GM12878 (cell line): ENCODE measurements at regions of chr7 and their contacts with region 1.

Region 1: DNA sequence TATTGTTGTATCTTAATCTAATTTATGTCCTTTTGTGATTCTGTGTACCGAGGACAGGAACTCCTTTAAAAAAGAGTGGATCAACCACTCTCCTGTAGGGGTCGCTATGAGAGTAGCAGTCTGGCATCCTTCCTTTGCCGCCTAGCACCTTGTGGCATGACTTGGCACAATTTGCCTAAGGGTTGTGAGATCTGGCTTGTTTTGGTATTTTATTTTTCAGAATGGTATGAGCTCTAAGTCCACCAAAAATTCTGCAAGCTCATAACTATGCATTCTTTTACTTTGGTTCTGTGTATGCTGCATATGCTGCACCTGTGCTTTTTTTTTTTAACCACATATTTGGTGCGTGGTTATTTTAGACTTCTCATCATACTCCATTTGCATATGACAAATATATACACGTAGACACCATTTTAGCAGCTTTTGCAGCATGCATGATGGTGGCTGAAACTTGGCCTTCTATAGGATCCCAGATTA is 112.8 kb downstream of the CDK14 start:
- DNase-seq: peak; percentile 67
- ATAC-seq: peak; percentile 71
- H3K4me3 ChIP-seq: peak overlapping the region; percentile 64
- H3K27ac ChIP-seq: peak overlapping the region; percentile 78
- H3K4me1 ChIP-seq: peaks cover 7% of the 10 kb centered on the region
- H3K27me3 ChIP-seq: no peaks in the 10 kb centered on the region
- CTCF ChIP-seq: peak; percentile 84 to 93 (median 88)
- EP300 ChIP-seq: no peak
- POLR2A ChIP-seq: no peak
- RAD21 ChIP-seq: peak; percentile 89

Region 2: GRCh38 chr7:90455163-90456030 is 253.5 kb before region 1 on chr7:
- CTCF ChIA-PET with region 1: interaction called, 9 read pairs
- POLR2A ChIA-PET with region 1: interaction called, 4 read pairs
- RAD21 ChIA-PET with region 1: interaction called, 7 read pairs
- SMC1A ChIA-PET with region 1: interaction called, 6 read pairs
- in situ Hi-C with region 1: no loop called
- intact Hi-C with region 1: loop called (anchors 5 kb)
- DNase-seq: peak; percentile 7
- ATAC-seq: peak; percentile 93
- H3K4me3 ChIP-seq: no peak overlapping the region
- H3K27ac ChIP-seq: no peak overlapping the region
- H3K4me1 ChIP-seq: no peaks in the 10 kb centered on the region
- H3K27me3 ChIP-seq: no peaks in the 10 kb centered on the region
- CTCF ChIP-seq: peak; percentile 61 to 76 (median 63); a peak in 5 of 6 replicates
- EP300 ChIP-seq: no peak
- POLR2A ChIP-seq: no peak
- RAD21 ChIP-seq: peak; percentile 79

Region 3: DNA sequence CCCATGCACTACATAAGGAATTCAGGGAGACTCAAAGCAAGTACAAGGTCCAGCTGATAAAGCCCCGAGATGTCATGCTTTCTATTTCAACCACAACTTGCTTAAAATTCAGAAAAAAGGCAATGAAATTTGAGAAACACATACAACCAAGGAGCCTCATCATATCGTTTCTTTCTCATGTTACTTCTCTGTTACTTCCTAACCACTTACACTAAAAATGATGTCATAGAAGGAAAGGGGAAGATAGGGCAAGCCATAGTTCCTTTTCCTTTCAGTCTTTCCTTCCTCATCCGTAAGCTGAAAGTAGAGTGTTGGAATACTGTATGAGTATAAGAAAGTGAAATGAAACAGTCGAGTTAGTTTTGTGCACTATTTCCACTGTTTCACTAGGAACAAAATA is 140.7 kb before region 1 on chr7:
- CTCF ChIA-PET with region 1: no interaction called
- POLR2A ChIA-PET with region 1: no interaction called
- RAD21 ChIA-PET with region 1: no interaction called
- SMC1A ChIA-PET with region 1: no interaction called
- in situ Hi-C with region 1: no loop called
- intact Hi-C with region 1: no loop called
- DNase-seq: no peak
- ATAC-seq: peak; percentile 22; the same call in 2 of the 3 replicates
- H3K4me3 ChIP-seq: no peak overlapping the region
- H3K27ac ChIP-seq: no peak overlapping the region
- H3K4me1 ChIP-seq: no peaks in the 10 kb centered on the region
- H3K27me3 ChIP-seq: no peaks in the 10 kb centered on the region
- CTCF ChIP-seq: no peak
- EP300 ChIP-seq: no peak
- POLR2A ChIP-seq: no peak
- RAD21 ChIP-seq: no peak

Region 4: GRCh38 chr7:90720984-90721760 is 12.3 kb after region 1 on chr7:
- CTCF ChIA-PET with region 1: interaction called, 60 read pairs
- POLR2A ChIA-PET with region 1: interaction called, 25 read pairs
- RAD21 ChIA-PET with region 1: interaction called, 41 read pairs
- SMC1A ChIA-PET with region 1: interaction called, 181 read pairs
- in situ Hi-C with region 1: no loop called
- intact Hi-C with region 1: no loop called
- DNase-seq: no peak
- ATAC-seq: peak; percentile 59
- H3K4me3 ChIP-seq: no peak overlapping the region
- H3K27ac ChIP-seq: no peak overlapping the region
- H3K4me1 ChIP-seq: peaks cover 4% of the 10 kb centered on the region
- H3K27me3 ChIP-seq: no peaks in the 10 kb centered on the region
- CTCF ChIP-seq: no peak
- EP300 ChIP-seq: no peak
- POLR2A ChIP-seq: no peak
- RAD21 ChIP-seq: no peak

Region 5: DNA sequence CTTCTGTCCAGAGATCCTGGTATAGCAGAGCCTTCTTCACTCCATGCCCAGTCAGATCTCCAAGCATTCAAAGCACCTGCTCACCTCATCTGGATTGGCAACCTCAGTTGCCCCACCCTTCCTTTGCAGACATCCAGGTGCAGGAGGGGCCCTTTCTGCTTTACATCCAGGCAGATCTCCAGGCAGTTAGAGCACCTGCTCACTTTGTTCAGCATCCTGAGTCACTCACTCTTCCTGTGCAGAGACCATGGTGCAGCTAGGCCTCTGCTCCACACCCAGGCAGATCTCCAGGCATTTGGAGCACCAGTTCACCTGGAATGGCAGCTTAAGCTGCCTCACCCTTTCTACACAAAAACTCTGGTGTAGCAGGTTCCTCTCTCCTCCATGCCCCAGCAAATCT is 40.4 kb after region 1 on chr7:
- CTCF ChIA-PET with region 1: interaction called, 183 read pairs
- POLR2A ChIA-PET with region 1: no interaction called
- RAD21 ChIA-PET with region 1: interaction called, 47 read pairs
- SMC1A ChIA-PET with region 1: interaction called, 73 read pairs
- in situ Hi-C with region 1: no loop called
- intact Hi-C with region 1: loop called (anchors 1 kb)
- DNase-seq: no peak
- ATAC-seq: peak; percentile 22; the same call in 1 of the 3 replicates
- H3K4me3 ChIP-seq: no peak overlapping the region
- H3K27ac ChIP-seq: no peak overlapping the region
- H3K4me1 ChIP-seq: no peaks in the 10 kb centered on the region
- H3K27me3 ChIP-seq: no peaks in the 10 kb centered on the region
- CTCF ChIP-seq: no peak
- EP300 ChIP-seq: no peak
- POLR2A ChIP-seq: no peak
- RAD21 ChIP-seq: no peak

Region 6: GRCh38 chr7:90816511-90817142 is 107.7 kb after region 1 on chr7:
- CTCF ChIA-PET with region 1: interaction called, 13 read pairs
- POLR2A ChIA-PET with region 1: no interaction called
- RAD21 ChIA-PET with region 1: interaction called, 16 read pairs
- SMC1A ChIA-PET with region 1: interaction called, 20 read pairs
- in situ Hi-C with region 1: no loop called
- intact Hi-C with region 1: loop called (anchors 2 kb)
- DNase-seq: peak; percentile 85
- ATAC-seq: peak; percentile 99
- H3K4me3 ChIP-seq: no peak overlapping the region
- H3K27ac ChIP-seq: peak overlapping the region; percentile 52
- H3K4me1 ChIP-seq: 0 out of 2 replicates have a peak, but pooled peaks cover 4% of the 10 kb centered on the region
- H3K27me3 ChIP-seq: no peaks in the 10 kb centered on the region
- CTCF ChIP-seq: no peak
- EP300 ChIP-seq: peak in 1 of 2 experiments; percentile 93; a peak in 3 of 4 replicates
- POLR2A ChIP-seq: no peak
- RAD21 ChIP-seq: no peak

Region 7: DNA sequence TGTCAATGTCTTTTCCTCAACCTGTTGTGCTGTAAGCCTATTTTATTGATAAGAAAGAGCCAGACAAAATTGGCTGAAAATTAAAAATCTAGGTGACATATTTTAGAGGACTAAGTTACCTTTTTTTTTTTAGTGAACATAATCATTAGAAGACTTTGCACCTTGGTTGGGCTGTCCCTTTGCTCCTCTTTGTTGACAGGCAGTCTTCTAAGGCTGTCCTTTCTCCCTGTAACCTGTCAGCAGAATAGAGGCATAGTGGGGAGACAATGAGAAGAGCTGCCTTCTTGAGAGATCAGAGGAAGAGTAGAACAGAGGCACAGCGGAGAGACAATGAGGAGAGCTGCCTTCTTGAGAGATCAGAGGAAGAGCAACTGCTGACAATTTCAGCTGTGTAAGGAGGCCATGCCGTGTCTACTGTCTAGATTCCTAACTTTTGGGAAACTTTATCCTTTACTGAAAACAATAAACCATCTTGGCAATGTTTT is 317.1 kb after region 1 on chr7:
- CTCF ChIA-PET with region 1: interaction called, 271 read pairs
- POLR2A ChIA-PET with region 1: no interaction called
- RAD21 ChIA-PET with region 1: interaction called, 132 read pairs
- SMC1A ChIA-PET with region 1: interaction called, 176 read pairs
- in situ Hi-C with region 1: loop called (anchors 5 kb)
- intact Hi-C with region 1: no loop called
- DNase-seq: no peak
- ATAC-seq: no peak
- H3K4me3 ChIP-seq: no peak overlapping the region
- H3K27ac ChIP-seq: no peak overlapping the region
- H3K4me1 ChIP-seq: no peaks in the 10 kb centered on the region
- H3K27me3 ChIP-seq: no peaks in the 10 kb centered on the region
- CTCF ChIP-seq: no peak
- EP300 ChIP-seq: no peak
- POLR2A ChIP-seq: no peak
- RAD21 ChIP-seq: no peak

Region 8: DNA sequence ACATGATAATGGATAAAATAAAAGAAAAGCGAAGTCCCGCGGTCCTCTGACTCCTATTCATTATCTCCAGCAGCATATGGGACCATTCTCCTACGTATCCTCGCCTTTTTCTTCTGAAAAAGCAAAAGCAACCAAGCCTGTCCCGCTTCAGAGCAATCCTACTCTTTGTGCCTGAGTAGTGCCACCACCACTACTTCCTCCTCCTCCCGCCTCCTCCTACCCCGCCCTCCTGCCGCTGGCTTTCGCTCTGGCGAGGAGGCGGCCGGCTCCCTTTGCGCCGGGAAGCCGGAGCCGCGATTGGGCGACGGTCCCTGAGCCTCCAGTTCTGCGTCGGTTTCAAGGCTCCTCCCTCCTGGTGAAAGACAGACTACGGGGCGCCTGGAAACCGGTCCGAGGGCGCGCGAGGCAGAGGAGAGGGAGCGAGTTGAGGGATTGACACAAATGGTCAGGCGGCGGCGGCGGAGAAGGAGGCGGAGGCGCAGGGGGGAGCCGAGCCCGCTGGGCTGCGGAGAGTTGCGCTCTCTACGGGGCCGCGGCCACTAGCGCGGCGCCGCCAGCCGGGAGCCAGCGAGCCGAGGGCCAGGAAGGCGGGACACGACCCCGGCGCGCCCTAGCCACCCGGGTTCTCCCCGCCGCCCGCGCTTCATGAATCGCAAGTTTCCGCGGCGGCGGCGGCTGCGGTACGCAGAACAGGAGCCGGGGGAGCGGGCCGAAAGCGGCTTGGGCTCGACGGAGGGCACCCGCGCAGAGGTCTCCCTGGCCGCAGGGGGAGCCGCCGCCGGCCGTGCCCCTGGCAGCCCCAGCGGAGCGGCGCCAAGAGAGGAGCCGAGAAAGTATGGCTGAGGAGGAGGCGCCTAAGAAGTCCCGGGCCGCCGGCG is 555.4 kb after region 1 on chr7 and contains the start of gene FZD1:
- CTCF ChIA-PET with region 1: no interaction called
- POLR2A ChIA-PET with region 1: no interaction called
- RAD21 ChIA-PET with region 1: no interaction called
- SMC1A ChIA-PET with region 1: no interaction called
- in situ Hi-C with region 1: no loop called
- intact Hi-C with region 1: loop called (anchors 10 kb)
- DNase-seq: peak; percentile 66
- ATAC-seq: peak; percentile 93
- H3K4me3 ChIP-seq: peak within 1 kb of the TSS; percentile 82
- H3K27ac ChIP-seq: no peak within 1 kb of the TSS
- H3K4me1 ChIP-seq: peaks cover 6% of the 10 kb centered on the region; the same call in 1 of the 2 replicates
- H3K27me3 ChIP-seq: peaks cover 6 to 8% of the 10 kb centered on the region in 2 experiments
- CTCF ChIP-seq: no peak
- EP300 ChIP-seq: no peak
- POLR2A ChIP-seq: peak; percentile 33; the same call in 1 of the 2 replicates
- RAD21 ChIP-seq: no peak
- polyA plus RNA-seq, gene FZD1: 0.07 to 0.10 TPM

Region 9: DNA sequence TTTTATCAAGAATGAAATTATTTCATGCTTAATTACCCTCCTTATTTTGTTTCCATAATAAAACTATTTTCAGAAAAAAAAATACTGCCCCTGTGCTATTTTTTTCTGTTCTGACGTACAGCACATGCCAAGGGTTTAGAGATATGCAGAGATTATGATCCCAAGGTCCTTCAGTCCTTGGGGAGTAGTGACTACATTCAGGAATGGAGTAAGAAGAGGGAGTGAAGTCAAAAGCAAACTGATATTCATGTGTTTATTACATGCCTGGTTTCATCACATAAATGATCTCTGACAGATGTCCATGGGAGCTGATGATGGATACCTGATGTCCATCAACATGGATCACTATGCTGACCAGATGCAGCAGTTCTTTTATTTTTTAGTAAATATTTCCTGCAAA is 1248.9 kb after region 1 on chr7:
- CTCF ChIA-PET with region 1: no interaction called
- POLR2A ChIA-PET with region 1: no interaction called
- RAD21 ChIA-PET with region 1: no interaction called
- SMC1A ChIA-PET with region 1: no interaction called
- in situ Hi-C with region 1: no loop called
- intact Hi-C with region 1: no loop called
- DNase-seq: no peak
- ATAC-seq: no peak
- H3K4me3 ChIP-seq: no peak overlapping the region
- H3K27ac ChIP-seq: no peak overlapping the region
- H3K4me1 ChIP-seq: no peaks in the 10 kb centered on the region
- H3K27me3 ChIP-seq: no peaks in the 10 kb centered on the region
- CTCF ChIP-seq: no peak
- EP300 ChIP-seq: no peak
- POLR2A ChIP-seq: no peak
- RAD21 ChIP-seq: no peak